GM10248 (cell line): ENCODE measurements at regions of chr12 and their contacts with region 1.

Region 1: DNA sequence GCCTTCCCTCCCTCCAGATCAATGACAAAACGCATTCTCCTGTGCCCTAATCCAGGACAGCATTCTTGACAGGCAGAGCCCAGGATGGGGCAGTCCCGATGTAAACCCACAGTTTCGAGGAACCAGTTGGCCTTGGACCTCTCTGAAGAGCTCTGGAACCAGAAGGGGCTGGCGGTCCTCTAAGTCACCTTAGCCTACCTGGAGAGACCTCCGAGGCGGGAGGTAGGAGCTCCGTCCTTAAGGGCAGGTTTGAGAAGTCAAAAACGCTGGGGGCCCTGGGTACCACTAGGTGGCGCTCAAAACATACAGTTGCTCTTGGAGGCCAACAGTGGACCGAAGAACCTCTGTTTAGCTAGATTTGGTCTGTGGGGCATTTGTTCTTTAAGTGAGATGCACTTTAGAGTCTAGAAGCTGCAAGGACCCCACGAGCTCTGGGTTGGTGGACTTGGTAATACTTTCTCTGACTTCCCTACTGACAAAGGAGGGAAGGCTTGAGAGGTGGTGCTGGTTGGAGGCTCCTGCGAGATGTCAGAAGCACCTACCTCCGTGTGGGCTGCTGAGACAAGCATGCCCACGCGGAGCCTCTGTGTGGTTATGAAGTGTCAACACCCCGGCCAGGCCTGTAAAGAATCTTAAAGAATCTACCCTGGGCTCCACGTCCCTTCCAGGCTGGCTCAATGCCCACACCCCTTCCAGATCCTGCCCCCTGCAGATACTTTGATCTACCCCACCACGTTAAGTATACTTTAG is 74.8 kb upstream of the CHST11 start:
- DNase-seq: peak; percentile 82
- CTCF ChIP-seq: peak; percentile 88

Region 2: GRCh38 chr12:104115587-104115975 is 266.3 kb before region 1 on chr12:
- CTCF ChIA-PET with region 1: no interaction called
- POLR2A ChIA-PET with region 1: no interaction called
- DNase-seq: no peak
- CTCF ChIP-seq: no peak

Region 3: GRCh38 chr12:104358347-104359003 is 23.4 kb before region 1 on chr12:
- CTCF ChIA-PET with region 1: interaction called, 11 read pairs
- POLR2A ChIA-PET with region 1: no interaction called
- DNase-seq: peak; percentile 83
- CTCF ChIP-seq: peak; percentile 92

Region 4: DNA sequence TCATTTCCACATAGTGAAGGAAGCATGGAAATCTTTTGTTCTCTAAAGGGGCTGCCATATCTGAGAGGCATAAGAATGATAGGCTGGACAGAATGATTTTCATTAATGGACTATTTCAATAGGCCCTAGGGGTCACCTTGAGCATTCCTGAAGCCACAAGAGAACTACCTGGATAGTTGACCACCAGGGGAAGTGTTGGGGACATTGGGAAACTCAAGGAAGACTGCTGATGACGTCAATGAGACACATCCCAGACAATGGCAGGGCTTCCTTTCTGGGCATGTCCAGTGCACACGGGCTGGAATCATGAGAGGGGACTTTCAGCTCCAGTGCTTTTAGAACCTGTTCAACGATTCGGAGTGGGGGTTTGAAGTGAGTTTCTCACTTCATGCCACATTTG is 26.0 kb after region 1 on chr12:
- CTCF ChIA-PET with region 1: interaction called, 17 read pairs
- POLR2A ChIA-PET with region 1: no interaction called
- DNase-seq: no peak
- CTCF ChIP-seq: no peak

Region 5: DNA sequence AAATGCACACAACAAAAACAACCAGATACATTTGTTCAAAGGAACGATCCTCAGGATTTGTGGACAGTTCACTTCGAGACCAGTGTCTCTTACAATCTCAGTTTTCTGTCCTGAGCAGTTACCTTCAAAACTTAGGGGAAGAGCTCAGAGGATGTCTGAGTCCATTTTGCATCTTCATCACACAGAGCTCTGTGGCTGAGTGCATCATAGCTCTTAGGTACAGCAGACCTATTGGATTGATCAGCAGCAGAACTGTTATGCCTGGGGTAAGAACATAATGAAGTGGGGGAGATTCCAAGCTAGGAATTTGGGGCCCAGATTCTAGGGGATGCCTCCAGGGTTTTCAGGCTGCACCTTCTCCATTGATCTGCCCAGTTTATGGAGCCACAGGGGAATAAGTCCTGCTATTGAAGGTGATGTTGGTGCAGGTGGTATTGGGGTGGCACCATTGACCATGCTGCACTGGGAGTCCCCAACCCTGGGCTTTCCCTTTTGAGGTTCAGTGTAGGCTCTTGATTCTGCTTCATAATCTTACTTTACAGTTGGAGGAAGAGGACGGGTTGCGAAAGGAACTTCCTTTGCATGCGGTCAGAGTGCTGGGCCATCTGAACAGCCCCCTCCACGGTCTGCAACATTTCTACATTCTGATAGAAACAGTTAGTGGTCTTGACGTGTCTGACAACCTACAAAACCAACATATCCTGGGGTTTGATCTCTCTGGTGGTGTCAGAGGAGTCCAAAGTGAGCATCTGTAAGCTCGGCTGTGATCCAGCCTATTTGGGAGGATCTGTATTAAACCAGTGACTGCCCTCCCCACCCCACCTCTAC is 187.7 kb after region 1 on chr12:
- CTCF ChIA-PET with region 1: interaction called, 12 read pairs
- POLR2A ChIA-PET with region 1: no interaction called
- DNase-seq: peak; percentile 58
- CTCF ChIP-seq: no peak

Region 6: GRCh38 chr12:104687823-104688573 is 306.1 kb after region 1 on chr12:
- CTCF ChIA-PET with region 1: interaction called, 10 read pairs
- POLR2A ChIA-PET with region 1: no interaction called
- DNase-seq: no peak
- CTCF ChIP-seq: no peak

Region 7: DNA sequence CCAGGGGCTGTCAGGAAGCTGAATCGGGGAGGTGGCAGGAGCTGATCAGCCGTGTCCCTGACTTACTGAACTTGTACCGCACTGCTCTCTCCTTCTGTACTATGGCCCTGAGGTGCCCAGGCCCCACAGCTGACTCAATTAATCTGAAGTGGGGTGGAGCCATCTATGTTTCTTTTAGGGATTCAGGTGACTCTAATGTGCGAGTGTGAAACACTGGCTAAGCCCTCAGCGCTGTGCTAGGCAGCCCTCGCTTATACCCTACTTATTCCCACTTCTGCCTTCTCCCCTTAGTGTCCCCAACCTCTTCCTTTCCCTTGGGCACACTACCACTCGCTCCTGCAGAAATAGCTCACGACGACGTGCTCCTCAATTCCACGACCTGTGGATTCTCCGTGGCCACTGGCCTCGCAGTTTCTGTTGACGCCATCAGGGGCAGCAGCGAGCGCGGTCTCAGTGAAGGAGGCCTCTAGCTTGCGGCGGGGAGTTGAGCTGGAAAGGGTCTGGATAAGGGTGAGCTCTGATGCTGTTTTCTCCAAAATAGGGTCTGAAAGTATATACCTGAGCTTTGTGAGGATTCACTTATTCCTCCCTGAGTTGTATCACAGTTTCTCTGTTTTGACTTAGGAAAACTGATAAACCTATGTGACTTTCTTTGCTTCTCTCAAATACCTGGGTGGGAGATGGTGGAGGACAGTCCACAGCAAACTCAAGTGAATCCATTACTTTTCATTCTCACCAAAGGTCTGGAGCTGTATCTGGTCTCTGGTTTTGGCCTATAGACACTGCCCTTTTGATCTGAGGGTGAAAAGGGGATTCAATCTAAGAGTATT is 408.6 kb after region 1 on chr12:
- CTCF ChIA-PET with region 1: interaction called, 10 read pairs
- POLR2A ChIA-PET with region 1: no interaction called
- DNase-seq: peak; percentile 31
- CTCF ChIP-seq: peak; percentile 83

Region 8: DNA sequence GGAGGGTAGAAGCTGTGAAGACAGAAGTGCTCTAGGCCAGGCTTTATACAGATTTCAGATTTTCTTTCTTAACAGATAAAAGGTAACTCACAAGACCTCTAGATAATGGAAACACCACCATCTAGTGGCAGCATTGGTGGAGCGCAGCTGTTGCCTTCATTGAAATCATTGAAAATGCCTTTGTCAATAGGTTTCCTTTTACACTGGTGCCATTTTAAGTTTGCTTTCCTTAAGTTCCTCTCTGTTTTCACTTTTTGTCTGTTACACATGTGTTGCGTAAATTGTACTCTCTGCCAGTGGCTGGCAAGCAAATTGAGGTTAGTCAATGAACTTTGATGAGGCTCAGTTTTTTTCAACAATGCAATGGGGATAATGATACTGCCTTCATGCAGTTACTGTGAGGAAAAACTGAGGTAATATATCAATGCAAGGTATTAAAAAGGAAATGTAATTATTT is 671.2 kb after region 1 on chr12:
- CTCF ChIA-PET with region 1: interaction called, 55 read pairs
- POLR2A ChIA-PET with region 1: no interaction called
- DNase-seq: peak; percentile 57
- CTCF ChIP-seq: peak; percentile 94